ENCODE measurements at regions of chr5 and their contacts with region 1.

Region 1: GRCh38 chr5:126354012-126354857 is 69.0 kb upstream of the GRAMD2B start:
- DNase-seq: no peak
- ATAC-seq: peak; percentile 47 to 93 (median 82)
- H3K4me3 ChIP-seq: peak overlapping the region in 5 of 10 donors; percentile 22 to 34 (median 33)
- H3K27ac ChIP-seq: peak overlapping the region in 4 of 10 donors; percentile 13 to 47 (median 36)
- H3K4me1 ChIP-seq: peaks cover 0 to 11% (median 5%) of the 10 kb centered on the region in 9 donors
- H3K27me3 ChIP-seq: no peaks in the 10 kb centered on the region
- CTCF ChIP-seq: peak; percentile 33 to 84 (median 68)

Region 2: GRCh38 chr5:125914471-125914870 is 439.8 kb before region 1 on chr5:
- intact Hi-C with region 1: no loop called
- DNase-seq: no peak
- ATAC-seq: no peak
- H3K4me3 ChIP-seq: no peak overlapping the region
- H3K27ac ChIP-seq: no peak overlapping the region
- H3K4me1 ChIP-seq: no peaks in the 10 kb centered on the region
- H3K27me3 ChIP-seq: no peaks in the 10 kb centered on the region
- CTCF ChIP-seq: no peak

Region 3: GRCh38 chr5:126422989-126423788 is 69.0 kb after region 1 on chr5 and contains the start of gene GRAMD2B:
- intact Hi-C with region 1: loop called in 1 of 10 experiments (anchors 5 kb)
- DNase-seq: peak; percentile 86 to 89
- ATAC-seq: peak; percentile 96 to 99 (median 98)
- H3K4me3 ChIP-seq: peak within 1 kb of the TSS; percentile 56 to 88 (median 65)
- H3K27ac ChIP-seq: peak within 1 kb of the TSS; percentile 87 to 97 (median 94)
- H3K4me1 ChIP-seq: peaks cover 0 to 35% (median 23%) of the 10 kb centered on the region in 9 donors
- H3K27me3 ChIP-seq: no peaks in the 10 kb centered on the region
- CTCF ChIP-seq: no peak
- total RNA-seq, gene GRAMD2B: 29.1 to 47.3 (median 35.3) TPM

Region 4: DNA sequence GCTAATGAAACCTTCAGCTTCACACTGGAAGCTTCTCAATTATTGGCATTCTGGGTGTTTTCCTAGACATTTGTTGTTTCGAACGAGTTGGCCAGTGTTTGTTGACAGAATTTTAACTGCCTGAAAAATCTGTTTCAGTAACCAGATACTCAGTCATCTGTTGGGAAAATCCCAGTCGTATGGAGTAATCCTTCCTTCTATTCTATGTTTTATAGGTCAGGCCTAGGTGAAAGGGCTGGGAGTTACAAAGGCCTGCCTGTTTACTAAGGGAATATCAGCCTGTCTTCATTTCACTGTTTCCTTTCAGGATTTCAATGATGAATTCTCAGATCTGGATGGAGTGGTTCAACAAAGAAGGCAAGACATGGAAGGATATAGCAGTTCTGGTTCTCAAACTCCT is 128.9 kb after region 1 on chr5:
- intact Hi-C with region 1: loop called in 1 of 10 experiments (anchors 5 kb)
- DNase-seq: no peak
- ATAC-seq: no peak
- H3K4me3 ChIP-seq: no peak overlapping the region
- H3K27ac ChIP-seq: peak overlapping the region in 1 of 10 donors; percentile 3
- H3K4me1 ChIP-seq: peaks cover 0 to 36% (median 5%) of the 10 kb centered on the region in 9 donors
- H3K27me3 ChIP-seq: no peaks in the 10 kb centered on the region
- CTCF ChIP-seq: no peak

Region 5: DNA sequence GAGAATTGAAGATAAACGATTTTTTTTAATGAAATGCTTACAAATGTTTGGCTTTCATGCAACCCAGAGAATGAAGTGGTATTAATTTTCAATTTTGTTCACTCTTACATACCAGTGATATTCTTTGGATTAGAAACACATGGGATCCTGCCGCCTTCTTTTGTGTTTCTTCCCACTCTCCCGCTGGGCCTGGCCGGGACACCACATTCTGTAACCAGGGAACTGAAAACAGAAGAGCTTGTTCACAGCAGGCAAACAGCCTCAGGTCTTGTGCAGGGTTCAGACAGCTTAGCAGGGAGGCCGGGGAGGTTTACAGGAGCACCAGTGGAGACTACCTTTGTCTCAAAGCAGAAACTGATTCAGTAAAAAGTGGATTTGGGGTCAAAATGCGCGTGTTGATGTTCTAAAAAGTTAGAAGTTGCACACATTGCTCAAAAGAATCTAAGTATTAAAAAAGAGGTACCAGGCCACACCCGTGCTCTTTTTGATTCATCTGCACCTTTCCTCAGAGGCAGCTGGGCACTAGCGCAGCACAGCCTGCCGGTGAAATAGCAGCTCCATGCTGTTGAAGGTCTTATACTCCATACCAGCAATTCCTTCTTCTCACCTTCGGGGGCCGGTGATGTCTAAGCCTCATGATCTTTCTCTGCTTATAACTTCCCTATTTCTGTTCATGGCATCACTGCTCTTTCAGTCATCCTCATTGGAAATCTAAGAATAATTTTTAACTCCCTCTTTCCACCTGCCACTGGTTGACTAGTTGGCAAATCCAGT is 136.1 kb after region 1 on chr5:
- intact Hi-C with region 1: loop called in 6 of 10 experiments (anchors 1 to 5 kb)
- DNase-seq: no peak
- ATAC-seq: peak in 2 of 8 donors; percentile 38 to 53
- H3K4me3 ChIP-seq: no peak overlapping the region
- H3K27ac ChIP-seq: peak overlapping the region in 1 of 10 donors; percentile 15
- H3K4me1 ChIP-seq: peaks cover 0 to 23% (median 3%) of the 10 kb centered on the region in 9 donors
- H3K27me3 ChIP-seq: no peaks in the 10 kb centered on the region
- CTCF ChIP-seq: no peak

Region 6: DNA sequence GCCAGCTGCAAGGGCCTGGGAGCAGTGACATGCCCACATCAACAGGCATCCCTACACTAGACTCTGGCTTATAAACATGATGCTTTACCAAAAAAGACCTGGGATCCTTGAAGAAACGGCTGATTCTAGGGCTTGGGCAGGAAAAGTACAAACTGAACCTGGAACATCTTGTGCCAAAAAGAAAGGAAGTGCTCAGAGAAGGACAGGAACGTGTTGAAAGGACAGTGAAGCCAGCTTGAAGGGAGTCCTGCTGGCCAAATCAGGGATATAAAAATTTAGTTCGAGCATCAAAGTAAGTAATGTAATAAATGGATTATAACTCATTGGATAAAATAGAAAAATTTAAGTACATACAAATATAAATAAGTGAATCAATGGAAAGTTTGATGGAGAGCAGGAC is 182.6 kb after region 1 on chr5:
- intact Hi-C with region 1: loop called (anchors 1 to 5 kb)
- DNase-seq: no peak
- ATAC-seq: peak in 1 of 8 donors; percentile 16
- H3K4me3 ChIP-seq: no peak overlapping the region
- H3K27ac ChIP-seq: no peak overlapping the region
- H3K4me1 ChIP-seq: peaks cover 0 to 12% (median 9%) of the 10 kb centered on the region in 9 donors
- H3K27me3 ChIP-seq: no peaks in the 10 kb centered on the region
- CTCF ChIP-seq: no peak

Region 7: DNA sequence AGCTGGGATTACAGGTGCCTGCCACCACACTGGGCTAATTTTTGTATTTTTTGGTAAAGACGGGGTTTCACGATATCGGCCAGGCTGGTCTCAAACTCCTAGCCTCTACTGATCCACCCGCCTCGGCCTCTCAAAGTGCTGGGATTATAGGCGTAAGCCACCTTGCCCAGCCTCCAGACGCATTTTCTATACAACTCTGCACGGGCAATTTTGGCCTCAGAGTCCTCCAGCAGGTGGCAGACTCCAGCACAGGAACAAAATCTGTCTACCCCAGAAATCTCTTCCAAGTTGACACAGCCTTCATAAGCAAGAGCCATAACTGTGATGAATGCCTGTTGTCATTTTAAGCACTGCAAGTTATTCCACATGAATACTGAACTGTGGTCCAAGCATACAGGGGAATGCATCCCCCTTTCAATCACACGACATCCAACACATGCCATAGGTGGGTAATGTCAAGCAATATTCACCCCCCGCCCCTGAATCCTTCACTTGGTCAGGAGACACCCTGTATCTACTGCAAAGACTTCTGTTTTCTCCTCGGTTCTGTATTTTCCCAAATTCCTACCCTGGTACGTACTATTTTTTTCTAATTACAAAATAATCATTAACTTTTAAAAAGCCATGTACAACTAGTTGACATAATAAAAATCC is 190.0 kb after region 1 on chr5:
- intact Hi-C with region 1: loop called (anchors 1 to 5 kb)
- DNase-seq: no peak
- ATAC-seq: no peak
- H3K4me3 ChIP-seq: no peak overlapping the region
- H3K27ac ChIP-seq: no peak overlapping the region
- H3K4me1 ChIP-seq: peaks cover 0 to 1% (median 0%) of the 10 kb centered on the region in 9 donors
- H3K27me3 ChIP-seq: no peaks in the 10 kb centered on the region
- CTCF ChIP-seq: peak in 8 of 9 donors; percentile 9 to 50 (median 30)

Region 8: GRCh38 chr5:126984632-126985031 is 630.4 kb after region 1 on chr5:
- intact Hi-C with region 1: no loop called
- DNase-seq: no peak
- ATAC-seq: no peak
- H3K4me3 ChIP-seq: no peak overlapping the region
- H3K27ac ChIP-seq: peak overlapping the region in 7 of 10 donors; percentile 24 to 86 (median 76)
- H3K4me1 ChIP-seq: peaks cover 0 to 82% (median 32%) of the 10 kb centered on the region in 9 donors
- H3K27me3 ChIP-seq: no peaks in the 10 kb centered on the region
- CTCF ChIP-seq: no peak